Activated CD8-positive, alpha-beta T cell treated with anti-CD3 and anti-CD28 coated beads, Interleukin-2, amount 10 ng/mL, durations not matched to agents 7 days and 5 days (primary cell): ENCODE measurements at regions of chr1 and their contacts with region 1.

Region 1: GRCh38 chr1:116418091-116418830 is 45.2 kb downstream of the ATP1A1 start:
- DNase-seq: peak; percentile 90
- ATAC-seq: peak; percentile 94
- H3K4me3 Mint-ChIP-seq: peak overlapping the region; percentile 90
- H3K27ac Mint-ChIP-seq: peak overlapping the region; percentile 92
- H3K4me1 Mint-ChIP-seq: peaks cover 68% of the 10 kb centered on the region
- H3K27me3 Mint-ChIP-seq: peaks cover 7% of the 10 kb centered on the region

Region 2: DNA sequence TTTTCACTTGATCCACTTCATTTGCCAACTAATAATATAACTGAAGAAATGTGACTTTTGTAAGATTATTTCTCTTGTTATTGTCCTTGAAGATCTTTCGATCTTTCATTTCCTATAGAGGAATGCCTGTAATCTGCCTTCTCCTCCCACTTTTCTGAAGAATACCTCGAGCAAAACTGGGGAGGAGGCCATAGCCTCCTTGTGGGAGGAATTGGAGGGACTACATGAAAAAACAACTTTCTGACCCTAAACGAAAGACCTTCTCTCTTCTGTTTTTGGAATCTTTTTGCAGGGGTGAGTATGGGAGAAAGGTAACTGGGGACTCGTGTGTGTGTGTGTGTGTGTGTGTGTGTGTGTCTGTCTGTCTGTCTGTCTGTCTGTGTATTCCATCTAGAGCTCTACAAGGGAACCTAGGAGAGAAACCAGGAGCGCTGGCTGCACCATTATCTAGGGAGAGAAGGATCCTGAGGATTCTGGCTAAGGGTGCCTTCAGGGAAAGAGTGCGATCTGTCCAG is 339.5 kb before region 1 on chr1:
- CTCF ChIA-PET with region 1: no interaction called
- POLR2A ChIA-PET with region 1: no interaction called
- DNase-seq: no peak
- ATAC-seq: no peak
- H3K4me3 Mint-ChIP-seq: no peak overlapping the region
- H3K27ac Mint-ChIP-seq: no peak overlapping the region
- H3K4me1 Mint-ChIP-seq: no peaks in the 10 kb centered on the region
- H3K27me3 Mint-ChIP-seq: peaks cover 6% of the 10 kb centered on the region

Region 3: GRCh38 chr1:116372587-116373444 is 45.4 kb before region 1 on chr1 and contains the start of gene ATP1A1:
- CTCF ChIA-PET with region 1: interaction called, 4 read pairs
- POLR2A ChIA-PET with region 1: interaction called, 27 read pairs
- DNase-seq: peak; percentile 98
- ATAC-seq: peak; percentile 71
- H3K4me3 Mint-ChIP-seq: peak within 1 kb of the TSS; percentile 92
- H3K27ac Mint-ChIP-seq: peak within 1 kb of the TSS; percentile 95
- H3K4me1 Mint-ChIP-seq: peaks cover 42% of the 10 kb centered on the region
- H3K27me3 Mint-ChIP-seq: peaks cover 21% of the 10 kb centered on the region
- total RNA-seq, gene ATP1A1: 203 to 204 TPM